K562 (cell line): ENCODE measurements at regions of chr1 and their contacts with region 1.

Region 1: GRCh38 chr1:25895365-25895993 is 10.7 kb downstream of the STMN1 start:
- DNase-seq: peak; percentile 95 to 99 (median 98)
- ATAC-seq: peak; percentile 88
- H3K4me3 ChIP-seq: no peak overlapping the region
- H3K27ac ChIP-seq: 0 out of 3 replicates have a peak overlapping the region, but pooled peaks have one; percentile 41
- H3K4me1 ChIP-seq: peaks cover 12 to 22% of the 10 kb centered on the region in 2 experiments
- H3K27me3 ChIP-seq: no peaks in the 10 kb centered on the region
- CTCF ChIP-seq: peak; percentile 100
- EP300 ChIP-seq: no peak; the same call in 1 of the 2 replicates
- POLR2A ChIP-seq: 0 out of 2 replicates have a peak, but pooled peaks have one; percentile 12
- RAD21 ChIP-seq: peak; percentile 100

Region 2: DNA sequence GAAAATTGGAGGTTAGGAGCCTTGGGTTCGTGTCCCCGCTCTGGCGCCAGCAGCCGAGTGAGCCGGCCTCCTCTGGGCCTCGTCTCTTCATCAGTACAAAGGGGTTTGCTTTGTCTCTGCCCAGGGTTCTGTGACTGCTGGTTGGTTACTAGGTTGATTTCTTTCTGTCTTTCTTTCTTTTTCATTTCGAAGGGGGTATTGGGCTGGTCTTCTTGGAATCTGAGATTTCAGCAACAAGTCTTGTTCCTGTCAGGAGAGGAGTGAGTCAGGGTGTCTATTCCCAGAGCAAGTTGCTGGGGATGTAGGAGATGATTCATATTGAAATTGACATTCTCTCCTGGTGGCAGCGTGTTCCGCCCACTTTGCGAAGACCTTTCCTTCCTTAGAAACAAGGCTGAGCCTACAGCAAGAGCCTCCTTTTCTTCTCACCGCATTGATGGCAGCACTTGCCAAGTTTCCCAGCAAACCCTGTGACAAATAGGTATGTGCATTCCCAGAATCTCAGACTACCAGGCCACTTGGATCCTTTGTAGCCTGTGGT is 199.6 kb before region 1 on chr1:
- CTCF ChIA-PET with region 1: no interaction called
- POLR2A ChIA-PET with region 1: no interaction called
- in situ Hi-C with region 1: no loop called
- intact Hi-C with region 1: no loop called
- DNase-seq: no peak
- ATAC-seq: no peak
- H3K4me3 ChIP-seq: no peak overlapping the region
- H3K27ac ChIP-seq: no peak overlapping the region
- H3K4me1 ChIP-seq: peaks cover 7% of the 10 kb centered on the region in 2 experiments; a peak in 4 of 5 replicates
- H3K27me3 ChIP-seq: peaks cover 34 to 88% of the 10 kb centered on the region in 2 experiments
- CTCF ChIP-seq: no peak
- EP300 ChIP-seq: no peak
- POLR2A ChIP-seq: no peak
- RAD21 ChIP-seq: no peak

Region 3: GRCh38 chr1:25771246-25772114 is 124.0 kb before region 1 on chr1:
- CTCF ChIA-PET with region 1: no interaction called
- POLR2A ChIA-PET with region 1: no interaction called
- in situ Hi-C with region 1: no loop called
- intact Hi-C with region 1: no loop called
- DNase-seq: no peak
- ATAC-seq: peak; percentile 75
- H3K4me3 ChIP-seq: no peak overlapping the region
- H3K27ac ChIP-seq: no peak overlapping the region
- H3K4me1 ChIP-seq: peaks cover 0 to 30% of the 10 kb centered on the region in 2 experiments; a peak in 3 of 5 replicates
- H3K27me3 ChIP-seq: peaks cover 4 to 36% of the 10 kb centered on the region in 2 experiments; a peak in 4 of 5 replicates
- CTCF ChIP-seq: no peak
- EP300 ChIP-seq: no peak
- POLR2A ChIP-seq: no peak
- RAD21 ChIP-seq: no peak

Region 4: GRCh38 chr1:25837262-25837875 is 58.1 kb before region 1 on chr1:
- CTCF ChIA-PET with region 1: interaction called, 4 read pairs
- POLR2A ChIA-PET with region 1: interaction called, 4 read pairs
- in situ Hi-C with region 1: no loop called
- intact Hi-C with region 1: loop called (anchors 2 kb)
- DNase-seq: no peak
- ATAC-seq: peak; percentile 67
- H3K4me3 ChIP-seq: no peak overlapping the region
- H3K27ac ChIP-seq: no peak overlapping the region
- H3K4me1 ChIP-seq: peaks cover 9 to 10% of the 10 kb centered on the region in 2 experiments; a peak in 4 of 5 replicates
- H3K27me3 ChIP-seq: no peaks in the 10 kb centered on the region
- CTCF ChIP-seq: peak; percentile 31 to 62 (median 51); a peak in 4 of 6 replicates
- EP300 ChIP-seq: no peak
- POLR2A ChIP-seq: no peak
- RAD21 ChIP-seq: peak; percentile 31 to 66; a peak in 3 of 4 replicates

Region 5: DNA sequence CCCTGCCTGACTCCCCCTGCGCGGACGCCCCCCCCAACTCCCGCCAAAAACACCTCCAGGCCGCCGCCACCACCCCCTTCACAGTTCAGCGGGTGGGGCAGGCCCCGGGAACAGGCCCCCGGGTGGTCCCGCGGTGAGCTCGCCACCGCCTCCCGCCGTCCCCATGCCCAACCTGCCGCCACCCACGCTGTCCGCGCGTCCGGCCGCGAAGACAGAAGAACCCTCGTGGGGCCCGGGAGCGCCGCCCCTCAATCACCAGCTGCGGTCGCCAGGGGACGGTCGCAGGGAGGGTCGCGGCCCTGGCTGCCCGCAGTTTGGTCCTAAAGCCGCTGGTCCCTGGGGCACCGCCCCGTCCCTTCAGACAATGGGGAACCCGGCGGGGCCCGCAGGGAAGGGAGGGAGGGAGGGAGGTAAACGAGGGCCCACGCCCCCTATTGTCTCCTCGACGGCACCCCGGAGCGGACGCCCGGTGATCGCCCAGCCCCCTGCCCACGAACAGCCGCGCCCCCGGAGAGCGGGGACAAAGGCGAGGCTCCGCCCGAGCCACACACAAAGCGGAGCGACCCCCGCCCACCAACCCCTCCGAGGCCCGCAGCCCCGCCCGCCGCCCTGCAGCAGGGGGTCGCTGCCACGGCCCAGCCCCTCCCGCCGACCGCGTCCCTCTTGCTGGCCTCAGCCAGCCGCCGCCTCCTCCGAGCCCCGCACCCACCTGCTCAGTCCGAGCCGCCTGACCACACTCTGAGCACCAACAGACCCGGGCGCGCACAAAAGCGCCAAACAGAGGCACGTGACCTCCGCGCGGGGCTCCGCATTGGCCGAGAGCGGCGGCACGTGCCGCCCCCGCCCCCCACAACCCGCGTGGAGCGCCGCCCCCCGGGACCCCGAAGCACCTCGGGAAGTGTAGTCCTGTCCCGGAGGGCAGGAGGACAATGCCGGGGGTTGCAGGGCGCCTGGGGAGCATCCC is 10.5 kb after region 1 on chr1 and contains the start of gene STMN1:
- CTCF ChIA-PET with region 1: interaction called, 3 read pairs
- POLR2A ChIA-PET with region 1: interaction called, 33 read pairs
- in situ Hi-C with region 1: no loop called
- intact Hi-C with region 1: no loop called
- DNase-seq: peak; percentile 97 to 99 (median 97)
- ATAC-seq: peak; percentile 94
- H3K4me3 ChIP-seq: peak within 1 kb of the TSS; percentile 78
- H3K27ac ChIP-seq: peak within 1 kb of the TSS; percentile 93
- H3K4me1 ChIP-seq: peaks cover 13 to 24% of the 10 kb centered on the region in 2 experiments; a peak in 4 of 5 replicates
- H3K27me3 ChIP-seq: no peaks in the 10 kb centered on the region
- CTCF ChIP-seq: no peak; a peak in 2 of 6 replicates
- EP300 ChIP-seq: peak; percentile 53
- POLR2A ChIP-seq: peak; percentile 97
- RAD21 ChIP-seq: peak in 1 of 2 experiments; percentile 20; a peak in 1 of 4 replicates
- polyA plus RNA-seq, gene STMN1: 2,090 to 2,153 TPM

Region 6: GRCh38 chr1:25997828-25998761 is 102.6 kb after region 1 on chr1 and contains the start of gene PAFAH2:
- CTCF ChIA-PET with region 1: interaction called, 120 read pairs
- POLR2A ChIA-PET with region 1: interaction called, 89 read pairs
- in situ Hi-C with region 1: loop called (anchors 5 kb)
- intact Hi-C with region 1: loop called (anchors 1 kb)
- DNase-seq: peak; percentile 95 to 100 (median 96)
- ATAC-seq: peak; percentile 97
- H3K4me3 ChIP-seq: peak within 1 kb of the TSS; percentile 43
- H3K27ac ChIP-seq: peak within 1 kb of the TSS; percentile 59
- H3K4me1 ChIP-seq: peaks cover 31 to 38% of the 10 kb centered on the region in 2 experiments
- H3K27me3 ChIP-seq: no peaks in the 10 kb centered on the region
- CTCF ChIP-seq: peak; percentile 98 to 100 (median 99)
- EP300 ChIP-seq: peak; percentile 76
- POLR2A ChIP-seq: peak; percentile 59
- RAD21 ChIP-seq: peak; percentile 100
- polyA plus RNA-seq, gene PAFAH2: 4.2 to 7.0 TPM

Region 7: GRCh38 chr1:26009796-26010460 is 114.4 kb after region 1 on chr1:
- CTCF ChIA-PET with region 1: interaction called, 6 read pairs
- POLR2A ChIA-PET with region 1: interaction called, 12 read pairs
- in situ Hi-C with region 1: no loop called
- intact Hi-C with region 1: no loop called
- DNase-seq: peak in 2 of 4 experiments; percentile 47 to 77
- ATAC-seq: peak; percentile 77
- H3K4me3 ChIP-seq: no peak overlapping the region
- H3K27ac ChIP-seq: no peak overlapping the region
- H3K4me1 ChIP-seq: peaks cover 19 to 23% of the 10 kb centered on the region in 2 experiments
- H3K27me3 ChIP-seq: no peaks in the 10 kb centered on the region
- CTCF ChIP-seq: peak; percentile 57 to 69 (median 59)
- EP300 ChIP-seq: no peak
- POLR2A ChIP-seq: no peak
- RAD21 ChIP-seq: peak in 1 of 2 experiments; percentile 77; a peak in 2 of 4 replicates

Region 8: DNA sequence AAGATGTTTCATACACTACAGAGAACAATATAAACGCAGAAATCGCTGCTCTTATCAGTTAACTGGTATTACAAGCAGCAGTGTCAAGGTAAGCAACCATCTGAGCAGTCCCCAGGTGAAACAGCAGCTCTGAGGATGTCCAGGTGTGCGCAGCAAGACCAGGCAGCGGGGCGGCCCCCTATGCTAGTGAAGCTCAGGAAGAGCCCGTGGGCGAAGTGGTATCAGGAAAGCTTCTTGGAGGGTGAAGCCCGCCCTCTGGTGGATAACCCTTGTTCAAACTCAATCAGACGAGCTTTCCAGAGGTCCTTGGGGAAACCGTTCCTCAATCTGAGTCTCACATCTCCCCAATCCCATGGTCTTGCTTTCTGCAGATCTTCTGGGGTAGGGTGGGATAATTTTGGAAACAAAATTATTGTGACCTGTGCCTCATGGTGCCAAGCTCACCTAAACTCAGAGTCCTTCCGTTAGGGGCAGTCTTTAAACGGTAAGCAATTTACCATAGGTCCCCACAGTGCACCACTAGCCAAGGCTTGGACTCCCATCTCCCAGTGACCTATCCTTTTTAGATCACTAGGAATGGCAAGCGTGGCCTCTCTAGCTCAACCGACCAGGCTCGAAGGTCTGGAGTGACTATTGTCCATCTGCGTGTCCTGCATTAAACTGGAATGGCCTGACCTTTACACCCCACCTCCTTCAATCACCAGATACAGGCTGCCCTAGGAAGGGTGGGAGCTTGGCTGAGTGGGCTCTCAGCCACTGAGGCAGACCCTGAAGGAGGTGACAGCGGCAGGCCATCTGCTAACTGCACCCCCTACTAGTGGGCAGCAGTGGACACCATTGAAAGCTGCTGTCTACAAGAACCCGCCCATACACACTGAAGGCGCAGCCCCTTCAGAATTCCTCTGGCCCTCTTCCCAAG is 249.8 kb after region 1 on chr1:
- CTCF ChIA-PET with region 1: interaction called, 5 read pairs
- POLR2A ChIA-PET with region 1: interaction called, 7 read pairs
- in situ Hi-C with region 1: loop called (anchors 5 kb)
- intact Hi-C with region 1: loop called (anchors 5 kb)
- DNase-seq: peak; percentile 82 to 95 (median 85)
- ATAC-seq: peak; percentile 93
- H3K4me3 ChIP-seq: no peak overlapping the region
- H3K27ac ChIP-seq: no peak overlapping the region
- H3K4me1 ChIP-seq: peaks cover 16 to 19% of the 10 kb centered on the region in 2 experiments; a peak in 4 of 5 replicates
- H3K27me3 ChIP-seq: no peaks in the 10 kb centered on the region
- CTCF ChIP-seq: peak; percentile 91 to 96 (median 92)
- EP300 ChIP-seq: no peak
- POLR2A ChIP-seq: no peak
- RAD21 ChIP-seq: peak; percentile 99 to 100

Region 9: GRCh38 chr1:26500488-26501175 is 605.2 kb after region 1 on chr1:
- CTCF ChIA-PET with region 1: no interaction called
- POLR2A ChIA-PET with region 1: no interaction called
- in situ Hi-C with region 1: no loop called
- intact Hi-C with region 1: no loop called
- DNase-seq: peak; percentile 92 to 97 (median 96)
- ATAC-seq: peak; percentile 85
- H3K4me3 ChIP-seq: peak overlapping the region; percentile 55
- H3K27ac ChIP-seq: peak overlapping the region; percentile 83
- H3K4me1 ChIP-seq: peaks cover 13 to 29% of the 10 kb centered on the region in 2 experiments
- H3K27me3 ChIP-seq: no peaks in the 10 kb centered on the region
- CTCF ChIP-seq: no peak
- EP300 ChIP-seq: no peak; the same call in 1 of the 2 replicates
- POLR2A ChIP-seq: no peak
- RAD21 ChIP-seq: no peak